Heart right ventricle (tissue), 16 donors: ENCODE measurements at regions of chr5 and their contacts with region 1.

Region 1: GRCh38 chr5:108642167-108642906 is 105.4 kb upstream of the FER start:
- DNase-seq: peak in 1 of 2 donors; percentile 69
- ATAC-seq: peak; percentile 82 to 95 (median 94)
- H3K4me3 ChIP-seq: peak overlapping the region in 1 of 10 donors; percentile 15
- H3K27ac ChIP-seq: peak overlapping the region in 6 of 10 donors; percentile 0 to 75 (median 50)
- H3K4me1 ChIP-seq: peaks cover 0 to 14% (median 5%) of the 10 kb centered on the region in 9 donors
- H3K27me3 ChIP-seq: no peaks in the 10 kb centered on the region
- CTCF ChIP-seq: peak; percentile 54 to 90 (median 83)

Region 2: DNA sequence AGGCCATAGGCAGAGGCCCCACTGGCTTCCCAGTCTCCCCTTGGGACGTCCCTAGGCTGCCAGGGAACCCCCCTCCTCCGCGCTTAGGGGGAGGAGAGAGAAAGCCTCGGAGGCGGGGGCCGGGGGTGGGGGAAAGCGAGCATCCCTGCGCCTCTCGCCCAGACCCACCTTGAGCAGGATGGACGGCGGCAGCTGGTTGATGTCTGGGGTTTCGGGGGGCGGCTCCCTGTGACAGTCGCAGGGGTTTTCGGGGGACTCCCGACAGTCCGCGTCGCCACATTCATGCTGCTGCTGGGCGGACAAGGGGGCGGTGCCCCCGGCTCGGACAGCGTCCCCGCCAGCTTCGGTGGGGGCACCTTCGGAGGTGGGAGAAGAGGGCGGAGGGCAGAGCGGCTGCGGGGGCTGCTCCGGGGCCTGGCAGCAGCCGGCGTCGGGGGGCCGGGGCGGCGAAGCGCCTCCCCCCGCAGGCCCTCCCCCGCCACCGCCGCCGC is 261.8 kb before region 1 on chr5:
- intact Hi-C with region 1: no loop called
- DNase-seq: peak; percentile 60 to 72
- ATAC-seq: peak; percentile 5 to 45 (median 30)
- H3K4me3 ChIP-seq: peak overlapping the region; percentile 84 to 99 (median 92)
- H3K27ac ChIP-seq: peak overlapping the region; percentile 91 to 100 (median 100)
- H3K4me1 ChIP-seq: peaks cover 0 to 41% (median 25%) of the 10 kb centered on the region in 9 donors
- H3K27me3 ChIP-seq: no peaks in the 10 kb centered on the region
- CTCF ChIP-seq: no peak

Region 3: DNA sequence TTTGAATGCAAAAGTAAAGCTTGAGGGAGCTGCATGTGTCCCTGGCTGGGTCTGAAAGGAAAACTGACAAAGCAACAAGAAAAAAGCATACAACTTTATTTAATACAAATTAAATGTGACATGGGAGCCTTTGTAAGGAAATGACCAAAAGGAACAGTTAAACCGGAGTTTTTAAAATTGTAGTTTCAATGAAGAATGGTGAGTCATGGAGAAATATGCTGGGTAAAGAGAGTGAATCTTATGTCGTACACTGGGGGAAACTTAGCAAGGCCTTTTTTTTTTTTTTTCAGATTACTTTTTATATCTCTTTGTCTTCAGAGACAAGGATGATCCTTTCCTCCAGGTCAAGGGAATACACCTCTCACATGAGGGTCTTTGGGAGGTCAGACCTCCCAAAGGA is 210.3 kb before region 1 on chr5:
- intact Hi-C with region 1: no loop called
- DNase-seq: no peak
- ATAC-seq: no peak
- H3K4me3 ChIP-seq: no peak overlapping the region
- H3K27ac ChIP-seq: no peak overlapping the region
- H3K4me1 ChIP-seq: peaks cover 0 to 5% (median 0%) of the 10 kb centered on the region in 9 donors
- H3K27me3 ChIP-seq: peaks cover 0 to 4% (median 0%) of the 10 kb centered on the region in 7 donors
- CTCF ChIP-seq: no peak

Region 4: DNA sequence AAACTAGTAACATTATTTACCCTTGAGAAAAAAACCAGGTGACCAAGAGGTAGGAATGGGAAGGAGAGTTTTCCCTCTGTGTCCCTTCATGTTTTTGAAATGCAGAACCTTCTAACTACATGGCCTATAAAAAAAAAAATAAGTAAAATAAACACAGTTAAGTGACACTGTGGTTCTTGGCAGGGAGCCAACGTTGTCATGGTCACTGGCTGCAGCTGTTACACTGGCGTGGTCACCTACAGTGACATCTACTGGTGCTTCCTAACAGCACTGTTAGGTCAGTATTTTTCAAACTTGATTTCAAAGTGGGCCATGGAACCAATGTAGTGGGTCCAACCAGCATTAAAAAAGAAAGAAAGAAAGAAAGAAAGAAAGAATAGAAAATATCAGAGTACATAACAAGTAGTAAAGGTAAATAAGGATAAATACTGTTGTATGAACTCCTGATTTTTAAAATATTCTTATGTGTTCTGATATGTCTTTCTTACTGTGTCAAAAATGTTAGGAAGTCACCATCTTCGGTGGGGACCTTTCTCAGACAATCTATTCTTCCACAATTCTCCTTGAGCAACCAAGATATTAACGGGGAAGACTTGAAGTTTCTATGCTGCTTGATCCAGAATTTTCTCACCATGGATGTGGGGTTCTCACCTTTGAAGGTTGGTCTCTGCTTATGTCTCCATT is 826.5 kb after region 1 on chr5:
- intact Hi-C with region 1: loop called in 2 of 10 experiments (anchors 5 to 10 kb)
- DNase-seq: peak; percentile 93 to 98
- ATAC-seq: peak; percentile 83 to 99 (median 97)
- H3K4me3 ChIP-seq: no peak overlapping the region
- H3K27ac ChIP-seq: no peak overlapping the region
- H3K4me1 ChIP-seq: peaks cover 0 to 7% (median 4%) of the 10 kb centered on the region in 9 donors
- H3K27me3 ChIP-seq: no peaks in the 10 kb centered on the region
- CTCF ChIP-seq: peak; percentile 63 to 93 (median 78)

Region 5: GRCh38 chr5:109479260-109479860 is 837.0 kb after region 1 on chr5:
- intact Hi-C with region 1: loop called in 1 of 10 experiments (anchors 10 kb)
- DNase-seq: no peak
- ATAC-seq: no peak
- H3K4me3 ChIP-seq: no peak overlapping the region
- H3K27ac ChIP-seq: no peak overlapping the region
- H3K4me1 ChIP-seq: peaks cover 0 to 11% (median 0%) of the 10 kb centered on the region in 9 donors
- H3K27me3 ChIP-seq: no peaks in the 10 kb centered on the region
- CTCF ChIP-seq: peak in 8 of 9 donors; percentile 20 to 61 (median 44)

Region 6: GRCh38 chr5:110625376-110625999 is 1983.2 kb after region 1 on chr5:
- intact Hi-C with region 1: loop called in 1 of 10 experiments (anchors 10 kb)
- DNase-seq: no peak
- ATAC-seq: no peak
- H3K4me3 ChIP-seq: no peak overlapping the region
- H3K27ac ChIP-seq: no peak overlapping the region
- H3K4me1 ChIP-seq: no peaks in the 10 kb centered on the region
- H3K27me3 ChIP-seq: no peaks in the 10 kb centered on the region
- CTCF ChIP-seq: peak; percentile 23 to 66 (median 55)